Ovary (tissue), 10 donors: ENCODE measurements at regions of chr20 and their contacts with region 1.

Region 1: GRCh38 chr20:32207626-32208498 is at the starts of genes PLAGL2 and POFUT1:
- DNase-seq: peak; percentile 87 to 94 (median 88)
- H3K4me3 ChIP-seq: peak within 1 kb of the TSS; percentile 91
- H3K27ac ChIP-seq: peak within 1 kb of the TSS; percentile 85 to 94
- H3K4me1 ChIP-seq: peaks cover 12% of the 10 kb centered on the region
- H3K27me3 ChIP-seq: no peaks in the 10 kb centered on the region
- CTCF ChIP-seq: peak in 1 of 3 donors; percentile 31
- EP300 ChIP-seq: no peak
- POLR2A ChIP-seq: peak; percentile 30
- total RNA-seq, gene PLAGL2: 6.6 to 21.8 (median 15.9) TPM
- total RNA-seq, gene POFUT1: 18.0 to 47.7 (median 32.3) TPM

Region 2: GRCh38 chr20:32168184-32168905 is 39.5 kb before region 1 on chr20:
- intact Hi-C with region 1: no loop called
- DNase-seq: no peak
- H3K4me3 ChIP-seq: no peak overlapping the region
- H3K27ac ChIP-seq: no peak overlapping the region
- H3K4me1 ChIP-seq: peaks cover 7% of the 10 kb centered on the region
- H3K27me3 ChIP-seq: no peaks in the 10 kb centered on the region
- CTCF ChIP-seq: no peak
- EP300 ChIP-seq: no peak
- POLR2A ChIP-seq: no peak

Region 3: GRCh38 chr20:32484958-32485769 is 277.3 kb after region 1 on chr20:
- intact Hi-C with region 1: loop called in 1 of 4 experiments (anchors 10 kb)
- DNase-seq: peak; percentile 65 to 84 (median 79)
- H3K4me3 ChIP-seq: peak overlapping the region; percentile 92
- H3K27ac ChIP-seq: peak overlapping the region in 1 of 2 donors; percentile 60
- H3K4me1 ChIP-seq: no peaks in the 10 kb centered on the region
- H3K27me3 ChIP-seq: no peaks in the 10 kb centered on the region
- CTCF ChIP-seq: peak; percentile 41 to 81 (median 68)
- EP300 ChIP-seq: no peak
- POLR2A ChIP-seq: no peak